PC-3 (cell line): ENCODE measurements at regions of chr18 and their contacts with region 1.

Region 1: GRCh38 chr18:41121116-41121826 is 833.8 kb upstream of the PIK3C3 start:
- DNase-seq: peak; percentile 64
- ATAC-seq: peak; percentile 90
- H3K4me3 ChIP-seq: no peak overlapping the region
- H3K27ac ChIP-seq: 0 out of 2 replicates have a peak overlapping the region, but pooled peaks have one; percentile 7
- H3K4me1 ChIP-seq: peaks cover 15% of the 10 kb centered on the region
- H3K27me3 ChIP-seq: no peaks in the 10 kb centered on the region
- CTCF ChIP-seq: no peak

Region 2: DNA sequence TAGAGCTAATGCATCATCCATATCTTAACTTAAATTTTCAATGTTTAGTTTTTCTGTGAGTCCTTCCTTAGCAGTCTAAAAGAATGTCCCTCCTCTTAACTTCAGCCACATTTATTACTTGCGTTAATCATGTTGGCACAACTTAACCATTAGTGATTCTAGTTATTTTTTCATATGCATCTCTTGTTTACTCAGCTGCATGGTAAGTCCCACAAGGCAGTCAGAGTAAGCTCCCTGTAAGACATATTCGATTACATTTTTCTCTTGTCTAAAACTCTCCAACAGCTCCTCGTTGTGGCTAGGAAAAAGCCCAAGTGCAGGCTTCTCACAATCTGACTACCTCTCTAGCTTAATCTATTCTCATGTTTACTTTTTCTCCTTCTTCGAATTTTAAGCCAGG is 1211.6 kb before region 1 on chr18:
- CTCF ChIA-PET with region 1: no interaction called
- POLR2A ChIA-PET with region 1: no interaction called
- intact Hi-C with region 1: no loop called
- DNase-seq: no peak
- ATAC-seq: no peak; the same call in 1 of the 2 replicates
- H3K4me3 ChIP-seq: no peak overlapping the region
- H3K27ac ChIP-seq: no peak overlapping the region
- H3K4me1 ChIP-seq: no peaks in the 10 kb centered on the region
- H3K27me3 ChIP-seq: no peaks in the 10 kb centered on the region
- CTCF ChIP-seq: no peak

Region 3: DNA sequence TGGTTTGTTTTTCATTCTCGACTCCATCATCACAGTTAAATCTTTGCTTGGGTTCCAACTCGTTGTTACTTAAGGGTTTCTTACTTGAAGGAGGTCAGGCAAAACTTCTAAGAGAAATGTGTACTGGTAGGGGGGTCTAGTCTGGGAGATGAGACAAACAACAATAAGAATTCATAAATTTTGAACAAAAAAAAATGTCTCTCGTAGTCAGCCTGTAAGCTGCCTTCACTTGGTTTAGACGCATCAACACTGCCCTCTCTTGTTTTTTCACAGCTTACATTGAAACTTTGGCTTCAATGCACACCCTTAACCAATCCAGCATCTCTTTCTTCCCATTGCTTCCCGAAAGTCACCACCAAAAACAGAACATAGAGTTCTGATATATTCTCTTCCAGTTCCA is 257.3 kb after region 1 on chr18:
- CTCF ChIA-PET with region 1: no interaction called
- POLR2A ChIA-PET with region 1: interaction called, 8 read pairs
- intact Hi-C with region 1: loop called (anchors 10 kb)
- DNase-seq: peak; percentile 50
- ATAC-seq: peak; percentile 78
- H3K4me3 ChIP-seq: no peak overlapping the region
- H3K27ac ChIP-seq: no peak overlapping the region
- H3K4me1 ChIP-seq: no peaks in the 10 kb centered on the region
- H3K27me3 ChIP-seq: no peaks in the 10 kb centered on the region
- CTCF ChIP-seq: peak; percentile 51